CD4-positive, alpha-beta memory T cell (primary cell): ENCODE measurements at regions of chr21 and their contacts with region 1.

Region 1: GRCh38 chr21:35026617-35027562 is 22.2 kb downstream of the RUNX1 start:
- DNase-seq: peak; percentile 88 to 91 (median 89)
- H3K4me3 ChIP-seq: peak overlapping the region; percentile 48 to 53
- H3K4me3 Mint-ChIP-seq: peak overlapping the region; percentile 83 to 97 (median 89)
- H3K27ac ChIP-seq: peak overlapping the region; percentile 71
- H3K27ac Mint-ChIP-seq: peak overlapping the region; percentile 97 to 100 (median 98)
- H3K4me1 ChIP-seq: peaks cover 92% of the 10 kb centered on the region
- H3K4me1 Mint-ChIP-seq: peaks cover 72 to 96% (median 87%) of the 10 kb centered on the region in 4 donors
- H3K27me3 ChIP-seq: no peaks in the 10 kb centered on the region
- H3K27me3 Mint-ChIP-seq: no peaks in the 10 kb centered on the region

Region 2: GRCh38 chr21:34367321-34367935 is 659.5 kb before region 1 on chr21:
- CTCF ChIA-PET with region 1: no interaction called
- POLR2A ChIA-PET with region 1: no interaction called
- intact Hi-C with region 1: no loop called
- DNase-seq: peak; percentile 24 to 53 (median 34)
- H3K4me3 ChIP-seq: no peak overlapping the region
- H3K4me3 Mint-ChIP-seq: no peak overlapping the region
- H3K27ac ChIP-seq: no peak overlapping the region
- H3K27ac Mint-ChIP-seq: no peak overlapping the region
- H3K4me1 ChIP-seq: no peaks in the 10 kb centered on the region
- H3K4me1 Mint-ChIP-seq: no peaks in the 10 kb centered on the region
- H3K27me3 ChIP-seq: no peaks in the 10 kb centered on the region
- H3K27me3 Mint-ChIP-seq: peaks cover 6 to 11% of the 10 kb centered on the region in 2 donors

Region 3: DNA sequence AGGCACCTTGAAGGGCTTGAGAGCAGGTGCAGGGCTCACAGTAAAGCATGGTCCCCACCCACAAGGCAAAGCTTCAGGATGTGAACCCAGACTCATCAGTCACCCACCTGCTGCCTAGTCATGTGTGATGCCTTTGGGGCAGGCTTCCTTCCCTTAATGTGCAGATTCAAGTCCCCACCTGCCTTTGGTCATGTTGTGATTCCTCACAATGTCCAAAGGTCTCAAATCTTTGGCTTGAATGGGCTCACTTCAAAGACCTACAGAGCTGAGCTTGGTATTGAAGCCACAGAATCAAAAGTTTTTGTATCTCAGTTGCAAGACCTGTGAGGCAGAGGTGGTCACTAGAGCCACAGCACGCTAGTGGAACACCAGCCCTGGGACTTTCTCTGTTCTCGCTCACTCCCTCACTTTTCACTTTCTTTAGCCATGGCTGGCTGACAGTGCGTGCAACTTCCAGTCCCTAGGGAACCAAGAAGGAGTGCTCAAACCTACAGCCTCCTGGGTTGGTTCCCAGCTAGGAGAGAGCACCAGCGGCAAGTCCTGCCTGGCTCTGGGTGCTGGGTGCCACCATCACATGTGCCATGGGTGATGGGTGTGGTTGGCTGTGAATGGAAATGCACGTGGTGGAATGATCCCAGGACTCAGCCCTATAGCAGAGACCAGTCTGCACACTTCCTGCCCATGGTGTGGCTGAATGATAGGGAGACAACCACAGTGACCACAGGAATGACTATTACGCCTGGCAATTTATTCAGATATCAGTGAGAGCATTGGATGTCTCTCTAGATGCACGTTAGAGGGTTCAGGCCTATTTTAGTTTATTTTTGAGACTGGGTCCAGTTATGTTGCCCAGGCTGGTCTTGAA is 384.4 kb before region 1 on chr21:
- CTCF ChIA-PET with region 1: no interaction called
- POLR2A ChIA-PET with region 1: no interaction called
- intact Hi-C with region 1: no loop called
- DNase-seq: no peak
- H3K4me3 ChIP-seq: no peak overlapping the region
- H3K4me3 Mint-ChIP-seq: no peak overlapping the region
- H3K27ac ChIP-seq: no peak overlapping the region
- H3K27ac Mint-ChIP-seq: no peak overlapping the region
- H3K4me1 ChIP-seq: peaks cover 14% of the 10 kb centered on the region
- H3K4me1 Mint-ChIP-seq: peaks cover 11 to 25% (median 18%) of the 10 kb centered on the region in 4 donors
- H3K27me3 ChIP-seq: no peaks in the 10 kb centered on the region
- H3K27me3 Mint-ChIP-seq: peaks cover 0 to 2% of the 10 kb centered on the region in 2 donors

Region 4: GRCh38 chr21:34926803-34927467 is 100.0 kb before region 1 on chr21:
- CTCF ChIA-PET with region 1: no interaction called
- POLR2A ChIA-PET with region 1: interaction called, 37 read pairs
- intact Hi-C with region 1: no loop called
- DNase-seq: no peak
- H3K4me3 ChIP-seq: no peak overlapping the region
- H3K4me3 Mint-ChIP-seq: no peak overlapping the region
- H3K27ac ChIP-seq: no peak overlapping the region
- H3K27ac Mint-ChIP-seq: peak overlapping the region in 3 of 7 donors; percentile 2 to 56 (median 30)
- H3K4me1 ChIP-seq: peaks cover 66% of the 10 kb centered on the region
- H3K4me1 Mint-ChIP-seq: peaks cover 49 to 80% (median 67%) of the 10 kb centered on the region in 4 donors
- H3K27me3 ChIP-seq: no peaks in the 10 kb centered on the region
- H3K27me3 Mint-ChIP-seq: no peaks in the 10 kb centered on the region

Region 5: GRCh38 chr21:34933609-34934335 is 93.1 kb before region 1 on chr21:
- CTCF ChIA-PET with region 1: interaction called, 5 read pairs
- POLR2A ChIA-PET with region 1: interaction called, 37 read pairs
- intact Hi-C with region 1: loop called (anchors 1 kb)
- DNase-seq: peak; percentile 62 to 75 (median 73)
- H3K4me3 ChIP-seq: peak overlapping the region; percentile 20 to 44
- H3K4me3 Mint-ChIP-seq: peak overlapping the region; percentile 66 to 92 (median 86)
- H3K27ac ChIP-seq: peak overlapping the region; percentile 73
- H3K27ac Mint-ChIP-seq: peak overlapping the region; percentile 94 to 99 (median 96)
- H3K4me1 ChIP-seq: peaks cover 90% of the 10 kb centered on the region
- H3K4me1 Mint-ChIP-seq: peaks cover 75 to 91% (median 82%) of the 10 kb centered on the region in 4 donors
- H3K27me3 ChIP-seq: no peaks in the 10 kb centered on the region
- H3K27me3 Mint-ChIP-seq: no peaks in the 10 kb centered on the region

Region 6: DNA sequence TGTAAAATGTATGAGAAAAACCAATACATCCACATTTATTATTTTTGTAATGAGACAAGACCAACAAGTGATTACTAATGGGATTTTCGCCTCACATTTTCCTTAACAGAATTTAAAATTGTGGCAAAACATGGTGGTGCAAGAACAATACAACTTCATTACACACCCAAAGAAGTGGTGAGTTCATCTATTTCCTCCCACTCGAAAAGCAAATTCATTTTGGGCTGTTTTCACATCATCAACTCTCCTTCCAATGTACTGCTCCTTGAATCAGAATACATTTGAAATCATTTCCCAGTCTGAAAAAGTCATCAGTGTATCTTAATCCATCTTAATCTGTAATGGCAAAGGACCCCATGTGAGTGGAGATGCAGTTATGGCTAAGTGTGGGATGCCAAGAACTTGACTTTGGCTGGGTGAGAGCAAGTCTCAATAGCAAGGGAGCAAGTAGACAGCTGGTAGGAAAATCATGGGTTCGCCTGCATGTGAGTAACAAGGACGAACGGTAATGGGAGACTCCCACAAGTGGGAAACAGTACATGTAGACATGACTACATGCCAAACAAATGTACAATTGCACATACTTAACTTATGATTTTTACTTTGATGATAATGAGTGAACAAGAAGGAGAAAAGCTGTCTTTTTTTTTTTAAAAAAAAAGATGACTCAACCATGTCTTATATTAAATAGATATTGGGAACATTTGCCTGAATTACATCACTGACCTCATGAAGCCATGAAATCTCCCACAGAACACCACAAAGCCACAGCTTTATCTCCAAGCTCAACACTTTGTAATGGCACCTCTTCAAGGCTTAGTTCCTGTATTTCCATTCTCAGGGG is 23.8 kb before region 1 on chr21:
- CTCF ChIA-PET with region 1: no interaction called
- POLR2A ChIA-PET with region 1: interaction called, 17 read pairs
- intact Hi-C with region 1: loop called (anchors 2 kb)
- DNase-seq: no peak
- H3K4me3 ChIP-seq: no peak overlapping the region
- H3K4me3 Mint-ChIP-seq: peak overlapping the region in 2 of 8 donors; percentile 3 to 24
- H3K27ac ChIP-seq: no peak overlapping the region
- H3K27ac Mint-ChIP-seq: peak overlapping the region in 6 of 7 donors; percentile 3 to 72 (median 12)
- H3K4me1 ChIP-seq: peaks cover 81% of the 10 kb centered on the region
- H3K4me1 Mint-ChIP-seq: peaks cover 76 to 97% (median 87%) of the 10 kb centered on the region in 4 donors
- H3K27me3 ChIP-seq: no peaks in the 10 kb centered on the region
- H3K27me3 Mint-ChIP-seq: no peaks in the 10 kb centered on the region

Region 7: GRCh38 chr21:35011681-35012080 is 15.2 kb before region 1 on chr21:
- CTCF ChIA-PET with region 1: interaction called, 5 read pairs
- POLR2A ChIA-PET with region 1: interaction called, 21 read pairs
- intact Hi-C with region 1: loop called (anchors 2 kb)
- DNase-seq: no peak
- H3K4me3 ChIP-seq: no peak overlapping the region
- H3K4me3 Mint-ChIP-seq: peak overlapping the region; percentile 7 to 82 (median 28)
- H3K27ac ChIP-seq: no peak overlapping the region
- H3K27ac Mint-ChIP-seq: peak overlapping the region; percentile 25 to 62 (median 54)
- H3K4me1 ChIP-seq: peaks cover 97% of the 10 kb centered on the region
- H3K4me1 Mint-ChIP-seq: peaks cover 80 to 94% (median 87%) of the 10 kb centered on the region in 4 donors
- H3K27me3 ChIP-seq: no peaks in the 10 kb centered on the region
- H3K27me3 Mint-ChIP-seq: no peaks in the 10 kb centered on the region

Region 8: DNA sequence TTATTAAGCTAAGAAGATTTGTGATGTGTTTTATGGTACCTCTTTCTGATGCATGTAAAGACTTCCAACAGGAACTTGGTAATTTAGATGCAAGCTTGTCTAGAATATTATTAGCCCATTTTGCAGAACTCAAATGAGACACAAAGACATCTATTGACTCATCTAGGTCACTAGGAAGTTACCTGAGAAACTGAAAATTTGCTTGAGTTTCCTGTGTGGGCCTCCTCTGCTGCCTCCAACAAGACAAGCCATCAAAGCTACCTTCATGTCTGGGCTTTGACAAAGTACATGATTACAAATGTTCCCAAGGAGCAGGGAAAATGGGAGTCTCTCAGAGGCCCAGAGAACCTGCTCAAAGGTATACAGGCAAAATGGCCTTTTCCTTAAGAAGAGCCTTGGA is 16.7 kb after region 1 on chr21:
- CTCF ChIA-PET with region 1: interaction called, 26 read pairs
- POLR2A ChIA-PET with region 1: interaction called, 729 read pairs
- intact Hi-C with region 1: loop called (anchors 1 kb)
- DNase-seq: peak in 4 of 5 donors; percentile 55 to 65 (median 59)
- H3K4me3 ChIP-seq: peak overlapping the region in 1 of 2 donors; percentile 73
- H3K4me3 Mint-ChIP-seq: peak overlapping the region; percentile 84 to 99 (median 96)
- H3K27ac ChIP-seq: peak overlapping the region; percentile 82
- H3K27ac Mint-ChIP-seq: peak overlapping the region; percentile 92 to 100 (median 99)
- H3K4me1 ChIP-seq: peaks cover 77% of the 10 kb centered on the region
- H3K4me1 Mint-ChIP-seq: peaks cover 58 to 98% (median 72%) of the 10 kb centered on the region in 4 donors
- H3K27me3 ChIP-seq: no peaks in the 10 kb centered on the region
- H3K27me3 Mint-ChIP-seq: peaks cover 1 to 3% of the 10 kb centered on the region in 2 donors